HCT116 (cell line): ENCODE measurements at regions of chr4 and their contacts with region 1.

Region 1: DNA sequence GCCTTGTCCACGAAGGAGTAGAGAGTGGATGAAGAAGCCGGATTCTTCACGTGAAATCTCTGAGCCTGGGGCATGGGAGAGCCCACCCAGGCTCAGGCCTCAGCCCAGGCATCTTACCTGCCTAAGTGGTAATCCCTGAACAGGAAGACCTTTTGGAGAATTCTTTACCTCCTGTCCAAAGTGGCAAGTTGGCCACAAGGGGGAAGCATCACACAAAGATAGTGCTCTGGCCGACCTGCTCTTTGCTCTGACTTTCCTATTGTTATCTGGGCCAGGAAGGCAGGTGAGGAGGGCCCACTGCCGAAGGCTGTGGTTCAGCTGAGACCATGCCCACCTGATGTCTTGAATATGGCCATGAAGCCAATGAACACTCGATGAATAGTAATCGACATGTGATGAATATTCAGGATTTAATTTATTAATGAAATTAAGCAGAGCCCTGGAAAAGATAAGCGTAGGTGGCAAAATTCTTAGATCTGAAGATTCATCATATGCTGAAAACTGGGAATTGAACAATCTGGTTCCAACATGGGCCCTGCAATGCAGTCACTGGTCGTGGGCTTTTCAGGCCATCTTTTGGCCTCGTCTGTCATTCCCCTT is 93.8 kb downstream of the PDGFRA start:
- DNase-seq: peak; percentile 57
- ATAC-seq: peak; percentile 93
- H3K4me3 ChIP-seq: no peak overlapping the region
- H3K27ac ChIP-seq: no peak overlapping the region
- H3K4me1 ChIP-seq: no peaks in the 10 kb centered on the region
- H3K27me3 ChIP-seq: peaks cover 5% of the 10 kb centered on the region; the same call in 1 of the 2 replicates
- CTCF ChIP-seq: peak; percentile 75 to 86 (median 75)
- POLR2A ChIP-seq: no peak
- RAD21 ChIP-seq: peak; percentile 88

Region 2: DNA sequence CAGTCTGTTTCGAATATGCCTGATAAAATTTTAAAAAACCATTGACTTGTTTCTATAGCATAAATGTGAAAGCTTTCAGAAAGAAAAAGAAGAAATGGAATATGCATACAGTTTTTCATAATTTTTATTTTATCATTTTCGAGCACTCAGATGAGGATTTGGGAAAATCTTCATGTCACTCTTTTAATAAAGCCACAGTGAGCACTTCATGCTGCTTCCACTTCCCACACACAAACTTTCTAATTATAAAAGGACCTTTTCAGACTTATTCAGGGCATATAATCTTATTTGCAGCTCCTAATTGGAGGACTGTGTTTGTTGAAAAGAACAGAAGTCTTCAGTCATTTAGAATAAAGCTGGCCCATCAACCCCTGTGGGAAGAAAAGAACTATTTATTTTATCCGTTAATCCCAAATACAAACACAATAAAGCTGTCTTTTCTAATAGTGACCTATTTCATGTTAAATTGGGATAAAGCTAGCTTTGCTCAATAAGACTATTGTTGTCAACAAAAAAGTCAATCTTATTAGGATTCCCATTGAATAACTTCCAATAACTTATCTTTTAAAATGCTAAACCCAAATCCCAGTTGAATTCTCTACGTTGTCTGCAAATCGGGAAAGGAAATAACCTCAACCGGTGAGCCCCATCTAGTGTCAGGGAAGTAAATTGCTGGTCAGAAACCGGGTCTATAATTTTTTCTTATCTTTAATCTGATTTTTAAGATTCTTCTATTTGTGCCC is 117.6 kb after region 1 on chr4:
- CTCF ChIA-PET with region 1: interaction called, 16 read pairs
- POLR2A ChIA-PET with region 1: interaction called, 5 read pairs
- RAD21 ChIA-PET with region 1: no interaction called
- intact Hi-C with region 1: loop called (anchors 1 kb)
- DNase-seq: peak; percentile 29
- ATAC-seq: no peak
- H3K4me3 ChIP-seq: no peak overlapping the region
- H3K27ac ChIP-seq: no peak overlapping the region
- H3K4me1 ChIP-seq: no peaks in the 10 kb centered on the region
- H3K27me3 ChIP-seq: peaks cover 14% of the 10 kb centered on the region; the same call in 1 of the 2 replicates
- CTCF ChIP-seq: peak; percentile 48 to 72 (median 49); a peak in 5 of 6 replicates
- POLR2A ChIP-seq: no peak
- RAD21 ChIP-seq: peak; percentile 62

Region 3: GRCh38 chr4:54661686-54662085 is 338.8 kb after region 1 on chr4:
- CTCF ChIA-PET with region 1: no interaction called
- POLR2A ChIA-PET with region 1: no interaction called
- RAD21 ChIA-PET with region 1: no interaction called
- intact Hi-C with region 1: loop called (anchors 10 kb)
- DNase-seq: no peak
- ATAC-seq: no peak
- H3K4me3 ChIP-seq: no peak overlapping the region
- H3K27ac ChIP-seq: no peak overlapping the region
- H3K4me1 ChIP-seq: peaks cover 0 to 16% of the 10 kb centered on the region in 2 experiments; a peak in 2 of 4 replicates
- H3K27me3 ChIP-seq: peaks cover 11% of the 10 kb centered on the region; the same call in 1 of the 2 replicates
- CTCF ChIP-seq: no peak
- POLR2A ChIP-seq: no peak
- RAD21 ChIP-seq: no peak

Region 4: GRCh38 chr4:54913751-54914526 is 591.0 kb after region 1 on chr4:
- CTCF ChIA-PET with region 1: no interaction called
- POLR2A ChIA-PET with region 1: no interaction called
- RAD21 ChIA-PET with region 1: no interaction called
- intact Hi-C with region 1: no loop called
- DNase-seq: no peak
- ATAC-seq: no peak
- H3K4me3 ChIP-seq: no peak overlapping the region
- H3K27ac ChIP-seq: no peak overlapping the region
- H3K4me1 ChIP-seq: no peaks in the 10 kb centered on the region
- H3K27me3 ChIP-seq: peaks cover 19% of the 10 kb centered on the region
- CTCF ChIP-seq: no peak
- POLR2A ChIP-seq: no peak
- RAD21 ChIP-seq: no peak

Region 5: GRCh38 chr4:54961357-54961975 is 638.5 kb after region 1 on chr4:
- CTCF ChIA-PET with region 1: interaction called, 4 read pairs
- POLR2A ChIA-PET with region 1: no interaction called
- RAD21 ChIA-PET with region 1: no interaction called
- intact Hi-C with region 1: loop called (anchors 1 kb)
- DNase-seq: peak; percentile 21
- ATAC-seq: peak; percentile 89
- H3K4me3 ChIP-seq: no peak overlapping the region
- H3K27ac ChIP-seq: no peak overlapping the region
- H3K4me1 ChIP-seq: no peaks in the 10 kb centered on the region
- H3K27me3 ChIP-seq: no peaks in the 10 kb centered on the region
- CTCF ChIP-seq: peak; percentile 46 to 70 (median 59); a peak in 5 of 6 replicates
- POLR2A ChIP-seq: no peak
- RAD21 ChIP-seq: peak; percentile 70

Region 6: DNA sequence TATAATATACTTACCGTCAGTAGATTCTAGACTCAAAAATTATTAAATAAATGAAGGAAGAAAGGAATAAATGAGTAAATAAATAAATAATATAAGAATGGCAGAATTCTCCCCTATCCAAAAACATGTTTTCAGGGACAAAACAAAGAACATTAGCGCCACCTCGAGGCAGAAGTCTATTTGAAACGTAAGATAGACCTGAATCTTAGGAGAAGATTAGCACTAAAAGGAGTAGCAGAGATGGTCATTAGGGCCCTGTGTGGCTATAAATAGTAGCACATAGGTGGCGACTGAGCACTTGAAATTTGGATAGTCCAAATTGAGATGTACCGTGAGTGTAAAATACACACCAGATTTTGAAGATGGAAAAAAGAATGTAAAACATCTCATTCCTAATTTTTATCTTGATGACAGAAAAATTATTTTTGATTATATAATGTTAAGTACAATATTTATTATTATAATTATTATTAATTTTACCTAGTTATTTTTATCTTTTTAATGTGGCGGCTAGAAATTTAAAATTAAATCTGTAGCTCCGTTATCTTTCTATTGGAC is 998.9 kb after region 1 on chr4:
- CTCF ChIA-PET with region 1: no interaction called
- POLR2A ChIA-PET with region 1: no interaction called
- RAD21 ChIA-PET with region 1: no interaction called
- intact Hi-C with region 1: loop called (anchors 5 kb)
- DNase-seq: peak; percentile 88
- ATAC-seq: peak; percentile 99
- H3K4me3 ChIP-seq: no peak overlapping the region
- H3K27ac ChIP-seq: no peak overlapping the region
- H3K4me1 ChIP-seq: peaks cover 0 to 10% of the 10 kb centered on the region in 2 experiments; a peak in 1 of 4 replicates
- H3K27me3 ChIP-seq: no peaks in the 10 kb centered on the region
- CTCF ChIP-seq: peak; percentile 60 to 96 (median 68)
- POLR2A ChIP-seq: no peak
- RAD21 ChIP-seq: peak; percentile 93